Activated CD4-positive, alpha-beta memory T cell treated with anti-CD3 and anti-CD28 coated beads for 36 hours (primary cell): ENCODE measurements at regions of chr14 and their contacts with region 1.

Region 1: GRCh38 chr14:22598099-22598899 is at the start of gene ABHD4:
- DNase-seq: peak; percentile 77
- H3K4me3 Mint-ChIP-seq: peak within 1 kb of the TSS; percentile 91
- H3K27ac Mint-ChIP-seq: peak within 1 kb of the TSS; percentile 71
- H3K4me1 Mint-ChIP-seq: peaks cover 34% of the 10 kb centered on the region
- H3K27me3 Mint-ChIP-seq: no peaks in the 10 kb centered on the region
- total RNA-seq, gene ABHD4: 10.0 to 13.6 TPM

Region 2: GRCh38 chr14:22579236-22579635 is 19.1 kb before region 1 on chr14:
- CTCF ChIA-PET with region 1: interaction called, 3 read pairs
- POLR2A ChIA-PET with region 1: no interaction called
- intact Hi-C with region 1: loop called (anchors 2 kb)
- DNase-seq: no peak
- H3K4me3 Mint-ChIP-seq: no peak overlapping the region
- H3K27ac Mint-ChIP-seq: no peak overlapping the region
- H3K4me1 Mint-ChIP-seq: peaks cover 68% of the 10 kb centered on the region
- H3K27me3 Mint-ChIP-seq: no peaks in the 10 kb centered on the region

Region 3: DNA sequence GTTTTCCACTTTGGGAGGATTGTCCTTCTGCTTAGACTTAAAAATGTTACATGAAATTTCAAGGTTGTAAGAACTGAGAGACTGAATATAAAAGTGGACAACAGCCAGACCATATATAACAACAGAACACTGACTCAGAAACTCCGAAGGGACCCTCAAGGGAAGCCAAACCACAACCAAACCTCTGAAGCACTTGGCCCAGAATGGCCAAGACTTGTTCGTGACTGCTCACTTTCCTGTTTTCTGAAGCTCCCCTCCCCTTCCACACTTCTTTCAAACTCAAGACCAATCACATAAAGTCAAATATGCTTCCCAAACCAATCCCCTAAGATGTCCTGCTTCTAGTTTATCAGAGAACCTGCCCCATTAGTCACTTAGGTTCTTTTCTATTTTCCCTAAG is 32.2 kb after region 1 on chr14:
- CTCF ChIA-PET with region 1: no interaction called
- POLR2A ChIA-PET with region 1: no interaction called
- intact Hi-C with region 1: no loop called
- DNase-seq: no peak
- H3K4me3 Mint-ChIP-seq: no peak overlapping the region
- H3K27ac Mint-ChIP-seq: no peak overlapping the region
- H3K4me1 Mint-ChIP-seq: no peaks in the 10 kb centered on the region
- H3K27me3 Mint-ChIP-seq: peaks cover 11% of the 10 kb centered on the region

Region 4: DNA sequence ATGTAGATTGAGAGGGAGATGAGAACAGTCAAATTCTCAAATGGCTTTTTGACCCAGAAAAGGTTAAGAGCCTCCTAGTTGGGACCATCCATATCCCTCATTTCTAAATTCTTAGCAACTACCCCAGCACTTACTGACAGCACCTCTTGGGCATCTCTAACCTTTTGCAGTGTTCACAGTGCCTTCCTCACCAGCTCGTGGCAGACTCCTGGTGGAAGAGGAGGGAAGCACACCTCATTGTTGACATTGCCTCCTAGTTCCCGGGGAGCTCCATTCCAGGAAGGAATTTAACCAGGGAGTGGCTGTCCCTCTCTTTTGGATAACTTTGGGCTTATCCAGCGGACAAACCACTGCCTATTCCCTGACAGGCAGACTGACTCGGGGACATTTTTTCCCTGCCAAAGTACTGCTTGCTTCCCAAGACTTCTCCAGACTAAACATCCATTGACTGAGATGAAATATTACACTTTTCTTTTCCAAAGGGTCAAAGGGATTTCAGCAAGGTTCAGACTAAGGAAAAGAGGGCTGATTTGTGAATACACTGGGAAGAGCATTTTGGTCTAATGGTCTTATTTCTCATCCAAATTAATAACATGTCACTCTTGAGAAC is 54.8 kb after region 1 on chr14:
- CTCF ChIA-PET with region 1: interaction called, 16 read pairs
- POLR2A ChIA-PET with region 1: no interaction called
- intact Hi-C with region 1: no loop called
- DNase-seq: peak; percentile 66
- H3K4me3 Mint-ChIP-seq: no peak overlapping the region
- H3K27ac Mint-ChIP-seq: no peak overlapping the region
- H3K4me1 Mint-ChIP-seq: no peaks in the 10 kb centered on the region
- H3K27me3 Mint-ChIP-seq: no peaks in the 10 kb centered on the region

Region 5: DNA sequence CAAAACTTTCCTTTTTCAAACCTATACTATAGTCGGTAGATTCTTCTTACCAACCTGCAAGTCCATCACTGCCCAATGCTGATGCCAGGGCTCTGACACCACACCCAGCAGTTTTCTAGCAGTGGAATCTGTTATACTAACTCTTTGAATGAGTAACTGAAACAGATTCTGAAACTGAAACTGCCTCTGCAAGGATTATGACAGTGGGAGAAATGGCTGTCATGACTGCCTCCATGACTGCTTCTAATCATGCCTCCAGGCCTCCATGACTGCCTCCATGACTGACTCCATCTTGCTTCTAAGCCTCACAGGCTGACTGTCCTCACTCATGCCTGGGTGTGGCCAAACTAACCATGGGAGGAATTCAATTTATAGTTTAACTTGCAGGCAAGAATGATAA is 138.8 kb after region 1 on chr14:
- CTCF ChIA-PET with region 1: no interaction called
- POLR2A ChIA-PET with region 1: no interaction called
- intact Hi-C with region 1: no loop called
- DNase-seq: peak; percentile 76
- H3K4me3 Mint-ChIP-seq: no peak overlapping the region
- H3K27ac Mint-ChIP-seq: peak overlapping the region; percentile 63
- H3K4me1 Mint-ChIP-seq: peaks cover 16% of the 10 kb centered on the region
- H3K27me3 Mint-ChIP-seq: no peaks in the 10 kb centered on the region